BJ (cell line): ENCODE measurements at regions of chr1 and their contacts with region 1.

Region 1: GRCh38 chr1:22195802-22196440 is 53.0 kb upstream of the WNT4 start:
- DNase-seq: no peak
- H3K4me3 ChIP-seq: no peak overlapping the region
- H3K27me3 ChIP-seq: peaks cover 1% of the 10 kb centered on the region
- CTCF ChIP-seq: no peak

Region 2: DNA sequence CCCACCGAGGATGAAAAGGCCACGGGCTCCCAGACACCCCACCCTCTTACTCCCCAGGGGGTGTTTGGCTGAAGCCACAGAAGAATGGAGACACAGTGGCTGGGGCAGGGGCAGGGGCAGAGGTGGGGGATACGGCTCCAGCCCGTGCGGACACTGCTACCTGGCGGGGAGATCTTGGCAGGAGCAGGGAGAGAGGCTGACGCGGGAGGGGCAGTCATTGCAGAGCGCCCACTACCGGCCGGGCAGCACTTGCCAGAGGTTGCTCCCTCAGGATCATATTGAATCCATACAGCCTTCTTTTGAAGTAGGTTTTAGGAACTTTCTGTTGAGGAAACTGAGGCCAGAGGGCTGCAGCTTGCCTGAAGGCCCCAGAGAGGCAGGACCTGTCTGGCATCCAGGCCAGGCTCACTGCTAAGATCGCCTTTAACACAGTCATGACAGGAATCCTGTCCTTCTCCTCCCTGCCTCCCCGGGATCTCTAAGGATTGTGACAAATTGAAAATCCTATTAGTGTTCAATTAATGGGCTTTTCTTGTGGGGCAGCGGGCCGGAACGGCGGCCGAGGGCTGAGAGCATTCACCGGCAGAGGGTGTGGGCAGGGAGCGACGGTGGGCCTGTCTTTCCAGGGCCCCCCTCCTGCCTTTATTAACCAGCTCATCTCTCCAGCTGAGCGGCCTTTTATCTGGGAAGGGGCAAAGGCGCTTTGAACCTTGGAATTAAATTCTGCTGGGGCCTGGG is 12.5 kb after region 1 on chr1:
- CTCF ChIA-PET with region 1: interaction called, 3 read pairs
- POLR2A ChIA-PET with region 1: interaction called, 13 read pairs
- DNase-seq: no peak
- H3K4me3 ChIP-seq: no peak overlapping the region
- H3K27me3 ChIP-seq: peaks cover 26% of the 10 kb centered on the region
- CTCF ChIP-seq: no peak